Dorsolateral prefrontal cortex (tissue), 120 donors: ENCODE measurements at regions of chr1 and their contacts with region 1.

Region 1: DNA sequence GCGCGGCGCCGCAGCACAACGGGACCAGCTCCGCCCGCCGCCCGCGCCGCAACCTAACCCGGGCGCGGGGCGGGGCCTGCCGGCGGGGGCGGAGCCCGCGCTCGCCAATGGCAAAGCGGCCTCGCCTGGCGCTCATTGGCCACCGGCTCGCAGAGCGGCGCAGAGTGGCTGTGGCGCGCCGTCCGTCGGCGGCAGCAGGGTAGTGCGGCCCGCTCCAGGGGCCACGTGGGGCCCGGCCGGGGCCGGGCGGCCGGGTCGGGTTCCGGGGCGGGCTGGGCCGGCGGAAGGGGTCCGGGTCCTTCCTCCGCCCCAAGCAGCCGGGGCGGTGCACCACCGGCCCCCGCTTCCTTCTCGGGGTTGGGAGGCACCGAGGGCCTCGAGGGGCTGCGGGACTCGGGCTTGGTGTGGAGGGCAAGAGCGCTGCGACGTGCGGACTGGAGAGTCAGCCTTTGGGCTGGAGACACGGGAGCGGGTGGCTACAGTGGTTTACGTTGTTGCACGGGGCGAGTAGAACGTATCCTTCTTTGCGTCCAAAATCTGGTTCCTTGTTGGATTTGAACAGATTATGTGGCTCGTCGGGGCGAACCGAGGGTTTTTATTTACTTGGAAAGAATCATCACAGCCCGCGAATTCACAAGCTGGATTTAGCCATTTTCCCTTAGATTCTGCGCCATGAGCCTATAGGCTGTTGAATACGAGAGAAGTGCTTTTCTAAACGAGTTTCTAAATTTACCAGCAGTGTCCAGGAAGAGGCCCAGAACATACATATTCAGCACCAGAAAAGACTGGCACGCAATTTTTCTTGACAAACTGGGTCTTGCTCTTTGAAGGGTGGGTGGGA is at the start of gene SRM:
- DNase-seq: peak; percentile 72 to 97 (median 89)
- H3K4me3 ChIP-seq: peak within 1 kb of the TSS; percentile 77 to 99 (median 91)
- H3K27ac ChIP-seq: peak within 1 kb of the TSS in 53 of 59 donors; percentile 6 to 87 (median 68)
- H3K27me3 ChIP-seq: no peaks in the 10 kb centered on the region
- CTCF ChIP-seq: peak in 46 of 56 donors; percentile 5 to 74 (median 56)
- total RNA-seq, gene SRM: 32.9 to 80.2 (median 52.9) TPM

Region 2: DNA sequence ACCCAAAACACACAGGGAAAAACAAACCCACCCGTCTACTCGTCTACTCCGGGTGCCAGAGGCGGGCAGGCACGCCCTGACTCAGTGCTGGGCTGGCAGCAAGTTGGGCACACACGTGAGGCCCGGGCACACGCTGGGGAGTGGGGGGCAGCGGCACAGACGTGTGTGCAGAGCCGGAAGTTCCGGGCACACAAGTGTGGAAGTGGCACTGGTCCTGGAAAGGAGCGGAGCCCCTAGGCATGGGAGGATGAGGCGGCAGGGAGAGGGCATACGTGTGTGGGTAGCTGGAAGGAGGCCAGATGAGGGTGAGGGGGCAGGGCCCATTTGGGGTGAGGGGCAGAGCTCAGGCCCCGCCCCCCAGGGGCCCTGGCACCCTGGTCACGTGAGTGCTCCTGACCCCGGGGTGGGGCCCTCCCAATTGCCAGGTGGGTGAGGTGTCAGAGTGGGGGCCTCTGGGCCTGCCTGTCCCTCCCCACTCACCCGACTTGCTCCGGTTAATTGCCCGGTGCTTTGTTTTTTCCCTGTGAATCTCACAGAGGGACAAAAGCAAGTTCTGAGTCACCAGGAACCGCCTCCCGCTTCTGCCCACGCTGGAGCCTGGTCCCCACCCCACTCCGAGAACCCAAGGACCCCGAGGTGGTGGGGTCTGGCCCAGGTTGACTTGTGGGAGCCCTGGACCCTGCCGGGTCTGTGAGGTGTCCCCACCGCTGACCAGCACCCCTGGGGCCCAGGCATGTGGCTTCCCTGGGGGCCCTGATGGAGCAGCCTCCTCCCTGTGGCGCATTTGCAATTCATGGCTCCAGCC is 158.9 kb before region 1 on chr1:
- intact Hi-C with region 1: no loop called
- DNase-seq: peak in 1 of 10 donors; percentile 15
- H3K4me3 ChIP-seq: no peak overlapping the region
- H3K27ac ChIP-seq: peak overlapping the region in 3 of 59 donors; percentile 19 to 36 (median 30)
- H3K27me3 ChIP-seq: peaks cover 0 to 28% (median 5%) of the 10 kb centered on the region in 45 donors
- CTCF ChIP-seq: no peak

Region 3: GRCh38 chr1:11178021-11179015 is 118.1 kb after region 1 on chr1:
- intact Hi-C with region 1: loop called in 1 of 2 experiments (anchors 10 kb)
- DNase-seq: no peak
- H3K4me3 ChIP-seq: no peak overlapping the region
- H3K27ac ChIP-seq: peak overlapping the region in 45 of 59 donors; percentile 0 to 78 (median 53)
- H3K27me3 ChIP-seq: no peaks in the 10 kb centered on the region
- CTCF ChIP-seq: no peak

Region 4: GRCh38 chr1:11214698-11215380 is 154.6 kb after region 1 on chr1:
- intact Hi-C with region 1: loop called in 1 of 2 experiments (anchors 10 kb)
- DNase-seq: no peak
- H3K4me3 ChIP-seq: no peak overlapping the region
- H3K27ac ChIP-seq: peak overlapping the region in 27 of 59 donors; percentile 6 to 63 (median 40)
- H3K27me3 ChIP-seq: no peaks in the 10 kb centered on the region
- CTCF ChIP-seq: no peak

Region 5: GRCh38 chr1:11352816-11353799 is 292.9 kb after region 1 on chr1:
- intact Hi-C with region 1: no loop called
- DNase-seq: no peak
- H3K4me3 ChIP-seq: no peak overlapping the region
- H3K27ac ChIP-seq: no peak overlapping the region
- H3K27me3 ChIP-seq: peaks cover 0 to 10% (median 0%) of the 10 kb centered on the region in 45 donors
- CTCF ChIP-seq: no peak